Sigmoid colon (tissue), 7 donors: ENCODE measurements at regions of chr9 and their contacts with region 1.

Region 1: GRCh38 chr9:69996967-69997366 is 46.7 kb upstream of the MAMDC2 start:
- DNase-seq: no peak
- H3K4me3 ChIP-seq: no peak overlapping the region
- H3K27ac ChIP-seq: peak overlapping the region in 3 of 4 donors; percentile 26 to 72 (median 30)
- H3K4me1 ChIP-seq: no peaks in the 10 kb centered on the region
- H3K27me3 ChIP-seq: no peaks in the 10 kb centered on the region
- CTCF ChIP-seq: no peak
- EP300 ChIP-seq: peak in 2 of 4 donors; percentile 15 to 42
- POLR2A ChIP-seq: no peak

Region 2: DNA sequence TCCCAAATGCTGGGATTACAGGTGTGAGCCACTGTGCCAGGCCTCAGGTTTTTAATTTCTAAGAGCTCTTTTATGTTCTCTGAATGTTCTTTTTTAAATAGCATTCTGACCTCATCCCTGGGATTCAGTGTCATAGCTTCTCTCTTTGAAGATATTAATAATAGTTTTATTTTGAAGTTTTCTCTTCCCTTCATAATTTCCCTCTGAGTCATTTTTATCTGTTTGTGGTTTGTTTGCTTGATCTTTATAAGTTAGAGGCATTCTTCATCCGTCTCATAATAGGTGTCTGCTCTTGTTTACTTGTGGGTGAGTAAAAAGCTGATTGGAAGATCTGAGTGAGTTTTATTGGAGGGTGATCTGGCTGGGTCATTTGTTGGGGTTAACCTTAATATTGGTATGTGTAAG is 34.2 kb after region 1 on chr9:
- intact Hi-C with region 1: loop called (anchors 5 kb)
- DNase-seq: no peak
- H3K4me3 ChIP-seq: no peak overlapping the region
- H3K27ac ChIP-seq: no peak overlapping the region
- H3K4me1 ChIP-seq: peaks cover 0 to 5% (median 0%) of the 10 kb centered on the region in 4 donors
- H3K27me3 ChIP-seq: no peaks in the 10 kb centered on the region
- CTCF ChIP-seq: no peak
- EP300 ChIP-seq: no peak
- POLR2A ChIP-seq: no peak

Region 3: DNA sequence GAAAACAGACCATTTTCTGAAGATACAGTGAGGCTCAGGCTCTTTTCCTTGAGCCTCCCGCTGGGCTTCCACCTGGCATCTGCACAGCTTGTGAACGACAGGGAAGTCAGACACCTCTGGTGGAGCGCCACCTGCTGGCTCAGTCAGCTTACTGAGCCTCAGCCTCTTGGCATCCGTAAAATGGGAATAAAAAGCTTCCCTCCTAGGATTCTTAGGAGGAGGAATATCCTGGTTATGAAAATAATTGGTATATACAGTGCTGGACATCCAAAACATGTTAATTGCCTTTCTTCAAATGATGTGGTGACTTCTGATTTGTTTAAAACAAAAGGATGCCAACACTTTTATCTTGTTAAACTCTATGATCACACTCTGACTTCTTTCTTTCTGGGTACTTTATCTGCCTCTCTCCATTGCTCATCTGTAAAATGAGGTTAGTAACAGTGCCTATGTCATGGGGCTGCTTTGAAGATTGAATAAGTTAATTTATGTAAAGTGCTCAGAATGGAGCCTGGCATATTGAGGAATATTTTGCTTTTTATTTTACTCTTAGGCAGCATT is 114.2 kb after region 1 on chr9:
- intact Hi-C with region 1: loop called (anchors 5 kb)
- DNase-seq: peak; percentile 94
- H3K4me3 ChIP-seq: no peak overlapping the region
- H3K27ac ChIP-seq: peak overlapping the region; percentile 42 to 72 (median 65)
- H3K4me1 ChIP-seq: peaks cover 0 to 68% (median 52%) of the 10 kb centered on the region in 4 donors
- H3K27me3 ChIP-seq: no peaks in the 10 kb centered on the region
- CTCF ChIP-seq: peak; percentile 50 to 90 (median 86)
- EP300 ChIP-seq: peak in 1 of 4 donors; percentile 20
- POLR2A ChIP-seq: no peak

Region 4: DNA sequence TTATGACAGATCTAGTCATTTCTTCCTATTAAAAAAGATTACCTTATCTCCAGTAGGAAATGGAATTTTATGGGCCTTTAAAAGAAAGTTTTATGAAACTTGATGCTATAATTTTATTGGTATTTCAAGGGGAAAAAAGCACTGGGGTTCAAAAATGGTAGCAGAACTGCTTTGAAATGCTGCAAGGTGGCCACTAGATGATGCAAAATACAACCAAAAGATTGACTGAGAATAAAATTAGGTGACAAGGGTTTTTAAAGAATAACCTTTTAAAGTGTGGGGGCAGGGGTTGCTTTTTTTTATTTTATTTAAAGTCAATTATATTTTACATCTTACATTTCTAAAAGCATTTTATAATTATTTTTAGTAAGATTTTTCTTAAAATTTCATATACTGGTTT is 355.8 kb after region 1 on chr9:
- intact Hi-C with region 1: no loop called
- DNase-seq: no peak
- H3K4me3 ChIP-seq: no peak overlapping the region
- H3K27ac ChIP-seq: peak overlapping the region; percentile 14 to 51 (median 34)
- H3K4me1 ChIP-seq: peaks cover 0 to 10% (median 4%) of the 10 kb centered on the region in 4 donors
- H3K27me3 ChIP-seq: no peaks in the 10 kb centered on the region
- CTCF ChIP-seq: peak; percentile 70 to 91 (median 72)
- EP300 ChIP-seq: no peak
- POLR2A ChIP-seq: no peak